Ascending aorta (tissue), 2 donors: ENCODE measurements at regions of chr7 and their contacts with region 1.

Region 1: GRCh38 chr7:92833024-92833765 is 3.2 kb downstream of the CDK6 start:
- DNase-seq: peak; percentile 46 to 90
- H3K4me3 ChIP-seq: peak overlapping the region; percentile 78 to 97
- H3K27ac ChIP-seq: peak overlapping the region; percentile 64 to 91
- H3K4me1 ChIP-seq: peaks cover 0 to 6% of the 10 kb centered on the region in 2 donors
- H3K27me3 ChIP-seq: no peaks in the 10 kb centered on the region
- CTCF ChIP-seq: peak; percentile 83 to 92 (median 85)

Region 2: GRCh38 chr7:92590711-92591310 is 242.4 kb before region 1 on chr7:
- intact Hi-C with region 1: loop called (anchors 1 kb)
- DNase-seq: no peak
- H3K4me3 ChIP-seq: peak overlapping the region; percentile 84 to 92
- H3K27ac ChIP-seq: no peak overlapping the region
- H3K4me1 ChIP-seq: peaks cover 0 to 20% of the 10 kb centered on the region in 2 donors
- H3K27me3 ChIP-seq: no peaks in the 10 kb centered on the region
- CTCF ChIP-seq: no peak

Region 3: DNA sequence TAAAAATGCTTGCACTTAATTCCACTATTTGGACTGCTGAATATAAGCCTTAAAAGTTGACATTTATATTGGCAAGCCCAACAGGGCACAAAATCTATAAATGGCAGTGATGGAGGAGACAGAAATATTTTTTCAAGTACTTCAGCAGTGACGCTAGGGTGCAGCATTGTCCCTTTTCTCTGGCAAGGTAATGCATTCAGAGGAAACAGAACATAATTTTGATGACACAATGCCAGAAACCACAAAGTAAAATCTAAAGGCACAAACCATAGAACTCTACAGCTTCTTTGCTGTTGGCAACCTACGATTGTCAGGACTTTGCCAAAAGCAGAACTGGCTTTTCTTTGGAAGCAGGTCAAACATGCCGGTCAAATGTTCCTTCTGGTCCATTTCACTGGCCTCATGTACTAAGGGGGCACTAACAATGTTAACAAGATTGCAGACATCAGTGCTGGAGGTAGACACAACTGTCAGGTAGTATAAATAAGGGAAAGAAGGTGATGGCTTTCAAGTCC is 212.1 kb before region 1 on chr7:
- intact Hi-C with region 1: loop called (anchors 1 kb)
- DNase-seq: peak in 1 of 2 donors; percentile 73
- H3K4me3 ChIP-seq: no peak overlapping the region
- H3K27ac ChIP-seq: peak overlapping the region; percentile 68 to 76
- H3K4me1 ChIP-seq: peaks cover 0 to 9% of the 10 kb centered on the region in 2 donors
- H3K27me3 ChIP-seq: no peaks in the 10 kb centered on the region
- CTCF ChIP-seq: peak; percentile 78 to 83 (median 80)

Region 4: DNA sequence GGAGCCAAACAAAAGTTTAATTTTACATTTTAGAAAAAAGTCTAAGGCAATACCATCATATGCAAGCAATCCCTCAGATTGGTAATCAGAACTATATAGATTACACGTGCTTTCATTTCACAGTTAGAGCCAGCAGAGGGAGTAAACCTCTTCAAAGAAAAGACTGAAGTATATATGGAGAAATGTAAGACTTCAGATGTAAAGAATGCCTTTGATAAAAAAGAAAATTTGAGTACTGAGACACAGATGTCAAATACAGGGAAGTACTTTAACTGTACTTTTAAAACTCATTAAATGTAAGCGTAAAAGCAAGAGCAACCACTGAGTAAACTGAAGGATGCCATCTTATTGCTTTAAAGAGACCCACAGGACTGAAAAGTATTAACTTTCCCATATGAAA is 141.6 kb before region 1 on chr7:
- intact Hi-C with region 1: loop called (anchors 2 kb)
- DNase-seq: no peak
- H3K4me3 ChIP-seq: no peak overlapping the region
- H3K27ac ChIP-seq: no peak overlapping the region
- H3K4me1 ChIP-seq: peaks cover 0 to under 1% of the 10 kb centered on the region in 2 donors
- H3K27me3 ChIP-seq: no peaks in the 10 kb centered on the region
- CTCF ChIP-seq: peak; percentile 21 to 49 (median 35)

Region 5: DNA sequence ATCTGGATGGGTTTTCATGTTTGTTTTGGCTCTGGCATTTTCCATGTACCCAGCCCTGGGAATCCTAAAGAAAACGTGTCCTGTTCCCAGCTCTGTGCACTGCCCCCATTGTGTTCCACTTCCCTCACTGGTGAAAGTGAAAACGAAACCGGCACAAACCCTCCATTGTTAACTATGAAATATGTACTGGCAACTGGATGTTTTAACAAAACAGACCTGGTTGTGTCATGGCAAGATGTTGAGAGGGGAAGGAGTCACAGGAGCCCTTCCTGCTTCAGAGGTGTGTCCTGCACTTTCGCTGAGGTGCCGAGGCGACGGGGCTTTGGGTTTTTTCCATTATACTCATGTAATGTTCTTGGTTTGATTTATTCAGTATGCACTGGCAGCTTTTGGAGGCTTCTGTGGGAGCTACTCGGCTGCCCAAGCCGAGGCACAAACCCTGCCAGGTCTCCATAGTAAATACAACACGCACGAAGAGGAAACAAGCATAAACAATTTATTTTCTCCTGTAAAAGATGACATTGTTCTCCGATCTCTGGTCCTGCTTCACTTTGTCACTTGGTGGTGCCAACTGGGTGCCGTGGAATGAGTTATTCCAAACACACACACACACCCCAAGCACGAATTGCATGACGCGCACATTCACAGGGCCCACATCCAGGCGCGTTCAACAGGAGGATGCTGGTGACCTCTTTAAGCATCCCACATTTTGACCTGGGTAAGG is 115.0 kb before region 1 on chr7:
- intact Hi-C with region 1: loop called (anchors 2 kb)
- DNase-seq: peak in 1 of 2 donors; percentile 81
- H3K4me3 ChIP-seq: peak overlapping the region; percentile 61 to 71
- H3K27ac ChIP-seq: peak overlapping the region; percentile 91 to 92
- H3K4me1 ChIP-seq: peaks cover 4 to 14% of the 10 kb centered on the region in 2 donors
- H3K27me3 ChIP-seq: no peaks in the 10 kb centered on the region
- CTCF ChIP-seq: no peak

Region 6: GRCh38 chr7:92790992-92791391 is 42.2 kb before region 1 on chr7:
- intact Hi-C with region 1: loop called (anchors 2 kb)
- DNase-seq: peak in 1 of 2 donors; percentile 79
- H3K4me3 ChIP-seq: no peak overlapping the region
- H3K27ac ChIP-seq: peak overlapping the region; percentile 45 to 51
- H3K4me1 ChIP-seq: peaks cover 0 to 31% of the 10 kb centered on the region in 2 donors
- H3K27me3 ChIP-seq: no peaks in the 10 kb centered on the region
- CTCF ChIP-seq: no peak

Region 7: DNA sequence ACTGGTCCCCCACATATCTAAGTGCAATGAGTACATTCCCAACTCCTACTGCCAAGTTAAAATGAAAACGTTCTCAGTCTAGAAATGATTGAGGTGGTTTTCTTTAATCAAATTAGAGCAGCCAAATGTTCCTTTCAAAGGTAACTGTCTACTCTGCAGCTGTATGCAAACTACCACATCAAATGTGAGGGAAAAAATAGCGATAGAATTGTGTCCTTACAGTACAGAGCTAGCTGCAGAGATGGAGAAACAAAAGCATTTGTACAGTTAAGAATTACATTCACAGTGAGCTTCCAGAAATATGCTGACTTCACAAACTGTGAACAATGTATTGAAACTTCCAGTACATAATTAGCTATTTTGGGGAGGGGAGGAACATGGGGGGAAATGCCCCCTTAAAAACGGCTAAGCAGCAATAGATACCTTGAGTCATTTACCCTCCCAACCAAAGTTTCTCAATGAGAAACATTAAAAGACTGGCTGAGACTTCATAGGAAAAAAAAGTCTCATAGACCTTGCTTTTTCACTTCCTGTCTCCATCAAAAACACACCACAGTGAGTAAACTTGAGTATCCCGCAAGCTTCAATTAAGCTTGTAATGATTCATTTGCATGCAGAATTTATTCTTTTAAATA is 19.7 kb before region 1 on chr7:
- intact Hi-C with region 1: no loop called
- DNase-seq: no peak
- H3K4me3 ChIP-seq: no peak overlapping the region
- H3K27ac ChIP-seq: no peak overlapping the region
- H3K4me1 ChIP-seq: no peaks in the 10 kb centered on the region
- H3K27me3 ChIP-seq: no peaks in the 10 kb centered on the region
- CTCF ChIP-seq: no peak

Region 8: GRCh38 chr7:92944633-92945032 is 111.4 kb after region 1 on chr7:
- intact Hi-C with region 1: no loop called
- DNase-seq: no peak
- H3K4me3 ChIP-seq: no peak overlapping the region
- H3K27ac ChIP-seq: no peak overlapping the region
- H3K4me1 ChIP-seq: no peaks in the 10 kb centered on the region
- H3K27me3 ChIP-seq: no peaks in the 10 kb centered on the region
- CTCF ChIP-seq: no peak

Region 9: DNA sequence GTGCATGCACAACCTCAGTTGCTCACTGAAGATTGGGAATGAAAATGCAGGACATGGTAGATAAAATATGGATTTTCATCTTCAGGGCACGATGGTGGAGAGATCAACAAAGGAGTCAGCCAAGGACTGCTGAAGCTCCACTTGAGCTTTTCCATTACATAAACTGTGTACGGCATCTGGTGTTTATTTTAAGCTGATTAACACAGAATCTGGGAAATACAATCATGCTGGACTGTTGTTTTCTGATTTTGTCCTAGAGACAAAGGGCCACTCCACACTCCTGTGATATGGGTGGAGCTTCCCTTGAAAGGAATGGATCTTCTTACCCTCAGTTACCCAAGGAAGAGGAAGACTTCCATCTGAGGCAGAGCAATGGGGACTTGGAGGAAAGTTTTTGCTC is 164.0 kb after region 1 on chr7:
- intact Hi-C with region 1: no loop called
- DNase-seq: no peak
- H3K4me3 ChIP-seq: no peak overlapping the region
- H3K27ac ChIP-seq: no peak overlapping the region
- H3K4me1 ChIP-seq: no peaks in the 10 kb centered on the region
- H3K27me3 ChIP-seq: no peaks in the 10 kb centered on the region
- CTCF ChIP-seq: no peak

Region 10: GRCh38 chr7:93055543-93056107 is 222.4 kb after region 1 on chr7:
- intact Hi-C with region 1: loop called (anchors 10 kb)
- DNase-seq: no peak
- H3K4me3 ChIP-seq: no peak overlapping the region
- H3K27ac ChIP-seq: no peak overlapping the region
- H3K4me1 ChIP-seq: no peaks in the 10 kb centered on the region
- H3K27me3 ChIP-seq: no peaks in the 10 kb centered on the region
- CTCF ChIP-seq: peak; percentile 66 to 79 (median 74)